K562 (cell line): ENCODE measurements at regions of chr12 and their contacts with region 1.

Region 1: DNA sequence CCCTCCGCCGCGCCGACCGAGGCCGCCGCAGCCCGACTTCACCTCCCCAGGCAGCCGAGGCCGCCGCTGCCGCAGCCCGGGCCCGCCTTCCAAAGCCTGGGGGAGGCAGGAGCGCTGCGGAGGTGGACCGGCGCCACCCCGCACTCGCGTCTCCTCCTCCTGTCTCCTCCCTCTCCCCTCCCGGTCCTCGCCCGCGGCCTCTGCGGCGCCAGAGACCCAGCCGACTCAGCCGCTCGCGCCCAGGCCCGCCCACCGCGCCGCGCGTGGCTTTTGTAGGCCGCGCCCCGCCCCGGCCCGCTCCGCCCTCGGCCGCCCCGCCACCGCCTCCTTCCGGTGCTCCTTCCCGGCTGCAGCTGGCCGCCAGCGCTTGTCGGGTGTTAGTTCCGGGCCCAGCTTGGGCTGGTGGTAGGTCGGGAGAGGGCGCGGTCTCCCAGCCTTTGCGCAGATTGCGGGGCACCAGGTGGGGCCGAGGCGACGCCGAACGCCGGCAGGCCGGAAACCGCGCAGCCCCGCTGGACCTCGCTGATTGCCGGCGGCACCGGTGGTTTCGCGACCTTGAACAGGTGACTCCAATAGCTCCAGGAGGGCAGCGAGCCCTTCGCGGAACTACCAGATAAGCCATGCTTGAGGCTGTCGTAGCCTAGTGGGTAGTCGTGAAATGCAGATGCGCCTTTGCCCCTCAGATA is at the start of gene CAPRIN2:
- DNase-seq: peak; percentile 89 to 97 (median 90)
- ATAC-seq: peak; percentile 95
- H3K4me3 ChIP-seq: peak within 1 kb of the TSS; percentile 64
- H3K27ac ChIP-seq: peak within 1 kb of the TSS; percentile 71
- H3K4me1 ChIP-seq: peaks cover 16 to 34% of the 10 kb centered on the region in 2 experiments; a peak in 3 of 5 replicates
- H3K27me3 ChIP-seq: no peaks in the 10 kb centered on the region
- CTCF ChIP-seq: peak; percentile 37 to 82 (median 57); a peak in 5 of 6 replicates
- EP300 ChIP-seq: no peak
- POLR2A ChIP-seq: peak; percentile 63
- RAD21 ChIP-seq: peak; percentile 24 to 53; a peak in 2 of 4 replicates
- polyA plus RNA-seq, gene CAPRIN2: 2.3 to 3.4 TPM

Region 2: GRCh38 chr12:30695199-30696103 is 59.4 kb before region 1 on chr12 and contains the start of gene IPO8:
- CTCF ChIA-PET with region 1: no interaction called
- POLR2A ChIA-PET with region 1: interaction called, 6 read pairs
- in situ Hi-C with region 1: no loop called
- intact Hi-C with region 1: loop called (anchors 2 kb)
- DNase-seq: peak; percentile 94 to 96 (median 94)
- ATAC-seq: peak; percentile 90
- H3K4me3 ChIP-seq: peak within 1 kb of the TSS; percentile 78
- H3K27ac ChIP-seq: peak within 1 kb of the TSS; percentile 86
- H3K4me1 ChIP-seq: peaks cover 11 to 13% of the 10 kb centered on the region in 2 experiments; a peak in 4 of 5 replicates
- H3K27me3 ChIP-seq: no peaks in the 10 kb centered on the region
- CTCF ChIP-seq: peak; percentile 9 to 39 (median 25); a peak in 3 of 6 replicates
- EP300 ChIP-seq: no peak; the same call in 1 of the 2 replicates
- POLR2A ChIP-seq: peak; percentile 76
- RAD21 ChIP-seq: no peak
- polyA plus RNA-seq, gene IPO8: 6.5 to 10.9 TPM

Region 3: GRCh38 chr12:30707613-30708342 is 47.1 kb before region 1 on chr12:
- CTCF ChIA-PET with region 1: no interaction called
- POLR2A ChIA-PET with region 1: no interaction called
- in situ Hi-C with region 1: no loop called
- intact Hi-C with region 1: no loop called
- DNase-seq: no peak
- ATAC-seq: no peak
- H3K4me3 ChIP-seq: no peak overlapping the region
- H3K27ac ChIP-seq: no peak overlapping the region
- H3K4me1 ChIP-seq: no peaks in the 10 kb centered on the region
- H3K27me3 ChIP-seq: no peaks in the 10 kb centered on the region
- CTCF ChIP-seq: no peak
- EP300 ChIP-seq: no peak
- POLR2A ChIP-seq: no peak
- RAD21 ChIP-seq: no peak

Region 4: DNA sequence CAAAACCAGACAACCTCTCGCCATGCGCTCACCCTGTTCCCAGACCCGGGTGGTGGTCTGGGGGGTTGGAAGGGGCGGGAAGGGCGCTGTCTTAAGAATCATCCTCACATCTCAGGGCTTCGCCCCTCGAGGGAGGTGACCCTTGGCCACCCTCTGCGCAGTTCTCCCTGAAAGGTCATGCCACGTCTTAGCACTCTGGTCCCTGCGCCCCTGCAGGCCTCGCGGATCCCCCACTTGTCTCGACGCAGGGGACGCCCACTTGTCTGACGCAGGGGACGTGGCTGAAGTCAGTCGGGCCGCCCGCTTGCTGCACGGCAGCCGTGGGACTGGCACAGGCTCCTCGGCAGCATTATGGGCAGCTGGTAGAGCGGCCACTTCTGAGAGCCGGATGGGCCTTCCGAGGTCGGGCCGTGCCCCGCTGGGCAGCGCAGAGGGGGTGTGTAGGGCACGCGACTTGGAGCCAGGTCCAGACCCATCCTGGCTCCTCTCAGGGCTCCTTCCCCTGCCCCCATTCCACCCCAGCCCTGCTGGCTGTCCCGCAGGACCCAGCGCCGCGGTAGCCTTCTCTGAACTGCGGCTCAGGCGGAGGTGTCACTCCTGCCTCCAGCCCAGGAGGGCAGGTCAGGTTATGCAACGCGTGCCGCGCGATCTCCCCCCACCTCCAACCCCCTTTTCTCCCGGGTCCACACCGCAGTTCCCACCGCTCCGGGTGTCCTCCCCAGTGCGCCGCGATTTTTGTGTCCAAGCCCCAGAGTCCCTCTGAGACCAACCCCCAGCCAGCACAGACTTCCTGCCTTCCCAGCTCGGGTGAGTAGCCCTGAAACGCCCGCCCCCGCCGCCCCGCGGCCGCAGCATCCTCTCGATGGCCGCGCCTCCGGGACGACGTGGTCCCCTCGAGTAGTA is 40.8 kb after region 1 on chr12:
- CTCF ChIA-PET with region 1: no interaction called
- POLR2A ChIA-PET with region 1: no interaction called
- in situ Hi-C with region 1: no loop called
- intact Hi-C with region 1: loop called (anchors 2 kb)
- DNase-seq: peak; percentile 56 to 66 (median 61)
- ATAC-seq: peak; percentile 92
- H3K4me3 ChIP-seq: peak overlapping the region; percentile 34
- H3K27ac ChIP-seq: no peak overlapping the region
- H3K4me1 ChIP-seq: peaks cover 0 to 13% of the 10 kb centered on the region in 2 experiments; a peak in 3 of 5 replicates
- H3K27me3 ChIP-seq: peaks cover 0 to 4% of the 10 kb centered on the region in 2 experiments; a peak in 2 of 5 replicates
- CTCF ChIP-seq: peak in 1 of 3 experiments; percentile 50; a peak in 2 of 6 replicates
- EP300 ChIP-seq: no peak
- POLR2A ChIP-seq: no peak
- RAD21 ChIP-seq: no peak